MCF 10A (cell line): ENCODE measurements at regions of chr7 and their contacts with region 1.

Region 1: GRCh38 chr7:19117091-19117869 is at the start of gene TWIST1:
- DNase-seq: peak; percentile 68
- H3K4me3 Mint-ChIP-seq: peak within 1 kb of the TSS; percentile 97
- H3K27ac Mint-ChIP-seq: peak within 1 kb of the TSS; percentile 91
- H3K4me1 Mint-ChIP-seq: peaks cover 12% of the 10 kb centered on the region
- H3K27me3 Mint-ChIP-seq: no peaks in the 10 kb centered on the region
- CTCF ChIP-seq: no peak
- total RNA-seq, gene TWIST1: 16.1 and 18.9 TPM in 2 replicates

Region 2: GRCh38 chr7:18352339-18353255 is 764.7 kb before region 1 on chr7:
- CTCF ChIA-PET with region 1: interaction called, 5 read pairs
- POLR2A ChIA-PET with region 1: no interaction called
- intact Hi-C with region 1: loop called (anchors 2 kb)
- DNase-seq: peak; percentile 74
- H3K4me3 Mint-ChIP-seq: peak overlapping the region; percentile 39
- H3K27ac Mint-ChIP-seq: no peak overlapping the region
- H3K4me1 Mint-ChIP-seq: peaks cover 5% of the 10 kb centered on the region
- H3K27me3 Mint-ChIP-seq: no peaks in the 10 kb centered on the region
- CTCF ChIP-seq: peak; percentile 69

Region 3: DNA sequence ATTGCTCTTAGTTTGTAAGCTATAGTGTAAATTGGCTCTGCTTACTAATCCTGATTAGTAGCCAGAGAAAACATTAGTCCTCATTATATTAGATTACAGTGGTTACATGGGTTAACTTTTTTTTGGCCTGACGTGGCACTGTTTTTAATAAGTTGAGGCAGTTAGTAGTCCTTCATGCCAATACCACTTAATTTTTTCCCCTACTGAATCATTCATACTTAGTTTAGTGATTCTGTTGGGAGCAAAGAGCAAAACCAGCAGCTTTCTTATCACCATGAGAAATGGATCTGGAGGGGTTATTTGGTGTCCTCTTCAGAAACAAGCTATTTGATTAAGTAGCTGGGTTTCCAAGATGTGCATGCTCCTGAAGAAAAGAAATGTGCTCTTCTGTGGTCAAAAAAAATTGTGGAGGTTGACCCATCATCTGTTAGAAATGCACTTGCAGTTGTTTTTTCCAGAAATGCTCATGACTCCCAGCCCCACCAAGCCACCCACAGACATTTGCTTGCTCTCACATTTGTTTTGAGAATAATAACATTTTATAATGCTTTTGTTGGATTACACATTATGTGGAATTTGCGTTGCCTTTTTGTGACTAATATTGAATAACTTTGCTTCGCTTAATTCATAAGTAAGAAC is 363.2 kb before region 1 on chr7:
- CTCF ChIA-PET with region 1: interaction called, 4 read pairs
- POLR2A ChIA-PET with region 1: interaction called, 3 read pairs
- intact Hi-C with region 1: loop called (anchors 10 kb)
- DNase-seq: no peak
- H3K4me3 Mint-ChIP-seq: no peak overlapping the region
- H3K27ac Mint-ChIP-seq: no peak overlapping the region
- H3K4me1 Mint-ChIP-seq: peaks cover 10% of the 10 kb centered on the region
- H3K27me3 Mint-ChIP-seq: no peaks in the 10 kb centered on the region
- CTCF ChIP-seq: no peak

Region 4: GRCh38 chr7:19060761-19061259 is 56.5 kb before region 1 on chr7:
- CTCF ChIA-PET with region 1: interaction called, 3 read pairs
- POLR2A ChIA-PET with region 1: interaction called, 5 read pairs
- intact Hi-C with region 1: loop called (anchors 2 kb)
- DNase-seq: peak; percentile 54
- H3K4me3 Mint-ChIP-seq: no peak overlapping the region
- H3K27ac Mint-ChIP-seq: peak overlapping the region; percentile 81
- H3K4me1 Mint-ChIP-seq: peaks cover 18% of the 10 kb centered on the region
- H3K27me3 Mint-ChIP-seq: no peaks in the 10 kb centered on the region
- CTCF ChIP-seq: no peak

Region 5: DNA sequence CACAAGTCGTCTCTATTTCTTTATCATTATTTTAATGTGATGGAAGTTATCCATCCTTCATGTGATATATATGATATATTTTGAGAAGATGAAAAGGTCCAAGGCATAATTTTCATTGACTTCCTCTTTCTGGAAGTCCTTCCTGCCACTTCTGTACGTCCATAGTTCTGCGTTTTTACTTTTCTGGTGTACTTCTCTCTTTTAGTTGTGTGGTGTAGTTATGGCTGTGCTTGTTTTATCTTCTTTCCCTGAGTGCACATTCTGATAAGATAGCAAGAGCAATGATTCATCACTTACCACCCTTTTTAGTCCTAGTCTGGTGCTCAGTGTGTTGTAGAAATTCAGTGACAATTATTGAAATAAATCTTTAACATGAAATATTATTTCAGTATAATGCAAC is 259.3 kb after region 1 on chr7:
- CTCF ChIA-PET with region 1: no interaction called
- POLR2A ChIA-PET with region 1: no interaction called
- intact Hi-C with region 1: no loop called
- DNase-seq: no peak
- H3K4me3 Mint-ChIP-seq: no peak overlapping the region
- H3K27ac Mint-ChIP-seq: no peak overlapping the region
- H3K4me1 Mint-ChIP-seq: no peaks in the 10 kb centered on the region
- H3K27me3 Mint-ChIP-seq: no peaks in the 10 kb centered on the region
- CTCF ChIP-seq: no peak

Region 6: DNA sequence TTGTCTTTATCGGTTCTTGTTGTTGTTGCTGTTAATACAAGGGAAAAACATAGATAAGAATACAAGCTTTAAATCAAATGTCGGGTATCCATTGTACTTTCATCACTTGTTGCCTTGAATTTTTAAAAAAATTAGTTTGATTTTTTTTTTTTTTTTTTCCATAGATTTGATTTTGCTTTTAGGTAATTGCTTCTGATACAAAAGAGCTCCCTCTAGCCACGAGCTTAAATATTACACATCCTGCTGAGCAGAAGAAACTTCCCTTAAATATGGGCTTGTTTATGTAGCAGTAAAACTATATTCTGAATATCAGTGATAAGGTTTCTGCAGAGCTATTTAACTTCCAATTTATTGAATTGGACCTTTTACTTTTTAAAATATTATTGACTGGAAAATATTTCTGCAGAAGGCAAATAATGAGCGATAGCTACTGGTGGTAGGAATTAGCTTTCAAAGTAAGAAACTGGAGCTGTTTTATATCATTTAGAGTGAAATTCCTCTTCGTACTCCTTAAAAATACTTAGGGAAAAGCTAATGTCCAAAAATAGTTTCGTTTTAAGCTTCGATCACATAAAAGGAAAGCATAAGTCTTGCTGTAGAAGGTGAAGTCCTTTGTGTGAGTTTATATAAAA is 374.7 kb after region 1 on chr7:
- CTCF ChIA-PET with region 1: interaction called, 15 read pairs
- POLR2A ChIA-PET with region 1: interaction called, 3 read pairs
- intact Hi-C with region 1: loop called (anchors 2 kb)
- DNase-seq: peak; percentile 28
- H3K4me3 Mint-ChIP-seq: no peak overlapping the region
- H3K27ac Mint-ChIP-seq: no peak overlapping the region
- H3K4me1 Mint-ChIP-seq: no peaks in the 10 kb centered on the region
- H3K27me3 Mint-ChIP-seq: no peaks in the 10 kb centered on the region
- CTCF ChIP-seq: peak; percentile 22

Region 7: GRCh38 chr7:19621740-19622139 is 504.5 kb after region 1 on chr7:
- CTCF ChIA-PET with region 1: interaction called, 32 read pairs
- POLR2A ChIA-PET with region 1: interaction called, 7 read pairs
- intact Hi-C with region 1: loop called (anchors 1 kb)
- DNase-seq: peak; percentile 67
- H3K4me3 Mint-ChIP-seq: no peak overlapping the region
- H3K27ac Mint-ChIP-seq: peak overlapping the region; percentile 89
- H3K4me1 Mint-ChIP-seq: peaks cover 33% of the 10 kb centered on the region
- H3K27me3 Mint-ChIP-seq: no peaks in the 10 kb centered on the region
- CTCF ChIP-seq: peak; percentile 34